ENCODE measurements at regions of chr1 and their contacts with region 1.

Region 1: DNA sequence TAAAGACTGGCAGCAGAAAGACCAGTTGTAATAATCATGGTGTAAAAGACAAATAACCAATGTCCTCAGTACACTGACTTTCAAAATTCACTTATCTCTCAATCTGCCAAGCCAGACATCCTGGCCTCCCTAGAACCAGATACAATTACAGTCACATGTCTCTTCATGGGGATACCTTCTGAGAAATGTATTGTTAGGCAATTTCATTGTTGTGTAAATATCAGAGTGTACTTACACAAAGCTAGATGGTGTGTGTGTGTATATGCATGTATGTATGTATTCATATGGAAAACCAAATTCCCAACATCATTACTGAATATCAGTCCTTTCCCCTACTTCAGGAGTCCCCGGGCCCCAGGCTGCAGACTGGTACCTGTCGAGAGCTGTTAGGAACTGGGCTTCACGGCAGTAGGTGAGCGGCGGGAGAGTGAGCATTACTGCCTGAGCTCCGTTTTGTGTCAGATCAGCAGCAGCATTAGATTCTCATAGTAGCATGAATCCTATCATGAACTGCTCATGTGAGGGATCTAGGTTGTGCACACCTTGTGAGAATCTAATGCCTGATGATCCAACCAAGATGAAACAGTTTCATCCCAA is 65.3 kb upstream of the ZNF326 start:
- DNase-seq: no peak
- ATAC-seq: peak in 1 of 2 donors; percentile 64
- H3K4me3 ChIP-seq: no peak overlapping the region
- H3K27ac ChIP-seq: no peak overlapping the region
- H3K4me1 ChIP-seq: peaks cover 7 to 17% of the 10 kb centered on the region in 2 donors
- H3K27me3 ChIP-seq: no peaks in the 10 kb centered on the region
- CTCF ChIP-seq: no peak
- POLR2A ChIP-seq: no peak

Region 2: GRCh38 chr1:89855413-89856123 is 74.0 kb before region 1 on chr1:
- in situ Hi-C with region 1: loop called in 1 of 4 experiments (anchors 10 kb)
- intact Hi-C with region 1: no loop called
- DNase-seq: no peak
- ATAC-seq: no peak
- H3K4me3 ChIP-seq: no peak overlapping the region
- H3K27ac ChIP-seq: no peak overlapping the region
- H3K4me1 ChIP-seq: peaks cover 0 to 5% of the 10 kb centered on the region in 2 donors
- H3K27me3 ChIP-seq: no peaks in the 10 kb centered on the region
- CTCF ChIP-seq: no peak
- POLR2A ChIP-seq: no peak

Region 3: GRCh38 chr1:89890085-89890752 is 39.3 kb before region 1 on chr1:
- in situ Hi-C with region 1: no loop called
- intact Hi-C with region 1: loop called (anchors 1 kb)
- DNase-seq: no peak
- ATAC-seq: no peak
- H3K4me3 ChIP-seq: no peak overlapping the region
- H3K27ac ChIP-seq: no peak overlapping the region
- H3K4me1 ChIP-seq: peaks cover 8 to 15% of the 10 kb centered on the region in 2 donors
- H3K27me3 ChIP-seq: no peaks in the 10 kb centered on the region
- CTCF ChIP-seq: no peak
- POLR2A ChIP-seq: no peak

Region 4: GRCh38 chr1:90114521-90115141 is 185.1 kb after region 1 on chr1:
- in situ Hi-C with region 1: no loop called
- intact Hi-C with region 1: no loop called
- DNase-seq: no peak
- ATAC-seq: no peak
- H3K4me3 ChIP-seq: no peak overlapping the region
- H3K27ac ChIP-seq: no peak overlapping the region
- H3K4me1 ChIP-seq: no peaks in the 10 kb centered on the region
- H3K27me3 ChIP-seq: no peaks in the 10 kb centered on the region
- CTCF ChIP-seq: peak in 3 of 5 experiments; percentile 10 to 41 (median 32)
- POLR2A ChIP-seq: no peak

Region 5: DNA sequence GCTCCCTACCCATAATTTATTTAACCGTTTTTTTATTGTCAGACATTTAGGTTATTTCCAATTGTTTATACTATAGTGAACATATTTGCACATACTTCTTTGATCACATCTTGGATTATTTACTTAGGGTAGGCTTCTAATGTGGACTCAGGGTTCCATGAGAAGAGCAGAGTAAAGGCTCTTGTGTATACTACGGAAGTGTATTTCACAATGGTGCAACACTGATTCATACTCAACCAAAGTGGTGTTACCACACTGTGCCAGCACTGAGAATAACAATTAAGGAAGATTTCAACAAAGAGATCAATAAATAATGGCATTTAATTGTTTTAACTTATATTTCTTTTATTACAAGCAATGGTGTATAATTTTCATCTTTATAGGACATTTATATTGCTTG is 316.5 kb after region 1 on chr1:
- in situ Hi-C with region 1: no loop called
- intact Hi-C with region 1: no loop called
- DNase-seq: no peak
- ATAC-seq: no peak
- H3K4me3 ChIP-seq: no peak overlapping the region
- H3K27ac ChIP-seq: no peak overlapping the region
- H3K4me1 ChIP-seq: no peaks in the 10 kb centered on the region
- H3K27me3 ChIP-seq: no peaks in the 10 kb centered on the region
- CTCF ChIP-seq: no peak
- POLR2A ChIP-seq: no peak

Measured in gastrocnemius medialis (tissue), 4 donors.